ENCODE measurements at regions of chr1 and their contacts with region 1.

Region 1: GRCh38 chr1:207084701-207085180 is 3.9 kb upstream of the C4BPB start:
- DNase-seq: no peak
- ATAC-seq: peak; percentile 71 to 83

Region 2: GRCh38 chr1:207282058-207282457 is 197.3 kb after region 1 on chr1:
- intact Hi-C with region 1: no loop called
- DNase-seq: no peak
- ATAC-seq: no peak

Region 3: GRCh38 chr1:207404849-207405525 is 320.2 kb after region 1 on chr1:
- intact Hi-C with region 1: loop called in 1 of 2 experiments (anchors 2 kb)
- DNase-seq: no peak
- ATAC-seq: peak; percentile 53 to 75

Region 4: GRCh38 chr1:207500306-207500705 is 415.6 kb after region 1 on chr1:
- intact Hi-C with region 1: loop called in 1 of 2 experiments (anchors 2 kb)
- DNase-seq: no peak
- ATAC-seq: no peak